ENCODE measurements at regions of chr20 and their contacts with region 1.

Region 1: DNA sequence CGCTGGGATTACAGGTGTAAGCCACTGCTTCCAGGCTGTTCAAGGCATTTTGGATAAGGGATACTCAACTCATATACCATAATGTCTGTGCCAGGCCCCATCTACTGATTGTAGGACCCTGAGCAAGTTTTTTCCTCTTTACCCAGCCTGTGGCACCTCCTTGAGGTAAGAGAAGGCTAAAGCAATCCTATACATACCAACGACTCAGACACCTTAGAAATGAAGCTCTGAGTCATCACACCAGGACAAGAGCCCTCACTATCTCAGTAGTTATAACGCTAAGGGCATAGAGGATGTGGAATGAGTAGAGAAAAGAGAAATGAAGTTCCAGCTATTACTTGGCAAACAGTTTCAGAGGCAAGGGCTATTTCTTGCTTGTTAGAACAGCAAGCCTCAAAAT is 16.9 kb downstream of the NDRG3 start:
- DNase-seq: peak; percentile 49
- ATAC-seq: peak; percentile 61
- H3K4me3 Mint-ChIP-seq: no peak overlapping the region
- H3K27ac Mint-ChIP-seq: peak overlapping the region; percentile 45
- H3K4me1 Mint-ChIP-seq: peaks cover 31% of the 10 kb centered on the region
- H3K27me3 Mint-ChIP-seq: no peaks in the 10 kb centered on the region

Region 2: GRCh38 chr20:36709126-36709525 is 19.9 kb before region 1 on chr20:
- CTCF ChIA-PET with region 1: no interaction called
- DNase-seq: no peak
- ATAC-seq: no peak
- H3K4me3 Mint-ChIP-seq: no peak overlapping the region
- H3K27ac Mint-ChIP-seq: no peak overlapping the region
- H3K4me1 Mint-ChIP-seq: no peaks in the 10 kb centered on the region
- H3K27me3 Mint-ChIP-seq: no peaks in the 10 kb centered on the region

Region 3: DNA sequence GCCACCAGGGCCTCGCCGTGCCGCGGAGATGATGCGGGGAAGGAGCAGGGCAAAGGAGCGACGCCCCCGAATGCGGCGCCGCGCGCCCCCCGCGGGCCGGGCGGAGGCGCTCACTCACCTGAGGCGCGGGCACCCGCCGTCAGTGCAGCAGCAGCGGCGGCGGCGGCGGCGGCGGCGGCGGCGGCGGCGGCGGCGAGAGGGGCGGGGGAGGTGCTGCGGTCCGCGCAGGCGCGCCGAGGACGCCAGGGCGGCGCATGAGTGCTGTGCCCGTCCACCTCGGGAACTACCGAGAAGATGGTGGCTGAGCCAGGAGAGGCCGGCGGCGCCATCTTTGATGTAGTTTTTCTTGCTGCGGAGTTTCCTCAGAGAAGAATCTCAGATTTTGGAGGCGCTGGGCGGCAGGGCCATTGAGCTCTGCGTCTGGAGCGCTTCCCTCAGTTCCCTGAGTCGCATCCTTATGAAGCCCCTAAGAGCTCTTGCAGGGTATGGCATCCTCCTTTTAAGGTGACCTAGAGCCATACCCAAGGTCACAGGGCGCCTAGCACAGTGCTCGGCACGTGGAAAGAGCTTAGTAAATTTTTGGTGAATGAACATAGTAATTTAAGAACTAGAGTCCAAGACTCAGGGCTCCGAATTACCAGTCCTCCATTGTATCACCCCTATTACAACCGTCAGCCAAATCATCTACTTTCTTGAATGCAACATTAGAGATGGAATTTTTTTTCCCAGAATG is 17.1 kb after region 1 on chr20 and contains the start of gene NDRG3:
- CTCF ChIA-PET with region 1: interaction called, 15 read pairs
- DNase-seq: peak; percentile 96
- ATAC-seq: peak; percentile 99
- H3K4me3 Mint-ChIP-seq: peak within 1 kb of the TSS; percentile 84
- H3K27ac Mint-ChIP-seq: peak within 1 kb of the TSS; percentile 84
- H3K4me1 Mint-ChIP-seq: peaks cover 24% of the 10 kb centered on the region
- H3K27me3 Mint-ChIP-seq: no peaks in the 10 kb centered on the region
- total RNA-seq, gene NDRG3: 27.8 to 28.8 TPM

Region 4: GRCh38 chr20:36784900-36785299 is 55.9 kb after region 1 on chr20:
- CTCF ChIA-PET with region 1: no interaction called
- DNase-seq: no peak
- ATAC-seq: no peak
- H3K4me3 Mint-ChIP-seq: no peak overlapping the region
- H3K27ac Mint-ChIP-seq: no peak overlapping the region
- H3K4me1 Mint-ChIP-seq: no peaks in the 10 kb centered on the region
- H3K27me3 Mint-ChIP-seq: no peaks in the 10 kb centered on the region

Measured in activated CD8-positive, alpha-beta memory T cell treated with anti-CD3 and anti-CD28 coated beads, Interleukin-2, amount 10 ng/mL, durations not matched to agents 7 days and 5 days (primary cell).